ENCODE measurements at regions of chr7 and their contacts with region 1.

Region 1: DNA sequence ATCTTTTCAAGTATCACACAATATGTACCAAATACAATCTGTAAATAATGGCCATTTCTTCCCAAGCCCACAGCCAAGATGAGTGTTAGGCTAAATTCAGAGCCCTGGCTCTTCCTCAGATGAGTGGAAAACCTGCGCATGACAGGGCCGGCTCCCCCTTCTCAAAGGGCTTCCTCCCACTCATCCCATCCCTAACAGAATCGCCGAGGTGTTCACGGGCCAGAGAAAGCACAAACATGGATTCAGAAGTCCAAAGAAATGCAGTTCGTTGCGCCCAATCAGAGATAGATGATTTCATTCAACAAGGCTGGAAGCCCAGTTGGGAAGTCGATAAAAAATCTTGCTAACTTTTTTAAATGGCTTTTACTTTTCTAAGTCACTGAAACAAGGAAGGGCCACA is 121.8 kb downstream of the UBE2H start:
- DNase-seq: no peak
- ATAC-seq: no peak
- H3K4me3 ChIP-seq: no peak overlapping the region
- H3K27ac ChIP-seq: peak overlapping the region; percentile 76
- H3K4me1 ChIP-seq: peaks cover 33% of the 10 kb centered on the region
- H3K27me3 ChIP-seq: no peaks in the 10 kb centered on the region
- CTCF ChIP-seq: no peak

Region 2: GRCh38 chr7:129859183-129859582 is 28.2 kb after region 1 on chr7:
- CTCF ChIA-PET with region 1: no interaction called
- POLR2A ChIA-PET with region 1: no interaction called
- intact Hi-C with region 1: no loop called
- DNase-seq: no peak
- ATAC-seq: no peak
- H3K4me3 ChIP-seq: no peak overlapping the region
- H3K27ac ChIP-seq: no peak overlapping the region
- H3K4me1 ChIP-seq: peaks cover 27% of the 10 kb centered on the region
- H3K27me3 ChIP-seq: no peaks in the 10 kb centered on the region
- CTCF ChIP-seq: no peak

Region 3: GRCh38 chr7:129958643-129959470 is 127.9 kb after region 1 on chr7:
- CTCF ChIA-PET with region 1: interaction called, 10 read pairs
- POLR2A ChIA-PET with region 1: no interaction called
- intact Hi-C with region 1: no loop called
- DNase-seq: peak; percentile 90
- ATAC-seq: peak; percentile 99
- H3K4me3 ChIP-seq: peak overlapping the region; percentile 10; the same call in 1 of the 2 replicates
- H3K27ac ChIP-seq: peak overlapping the region; percentile 87
- H3K4me1 ChIP-seq: peaks cover 28% of the 10 kb centered on the region
- H3K27me3 ChIP-seq: no peaks in the 10 kb centered on the region
- CTCF ChIP-seq: no peak